GM13976 (cell line): ENCODE measurements at regions of chr13 and their contacts with region 1.

Region 1: GRCh38 chr13:102913914-102914313 is 68.1 kb downstream of the ERCC5 start:
- DNase-seq: no peak
- CTCF ChIP-seq: no peak

Region 2: DNA sequence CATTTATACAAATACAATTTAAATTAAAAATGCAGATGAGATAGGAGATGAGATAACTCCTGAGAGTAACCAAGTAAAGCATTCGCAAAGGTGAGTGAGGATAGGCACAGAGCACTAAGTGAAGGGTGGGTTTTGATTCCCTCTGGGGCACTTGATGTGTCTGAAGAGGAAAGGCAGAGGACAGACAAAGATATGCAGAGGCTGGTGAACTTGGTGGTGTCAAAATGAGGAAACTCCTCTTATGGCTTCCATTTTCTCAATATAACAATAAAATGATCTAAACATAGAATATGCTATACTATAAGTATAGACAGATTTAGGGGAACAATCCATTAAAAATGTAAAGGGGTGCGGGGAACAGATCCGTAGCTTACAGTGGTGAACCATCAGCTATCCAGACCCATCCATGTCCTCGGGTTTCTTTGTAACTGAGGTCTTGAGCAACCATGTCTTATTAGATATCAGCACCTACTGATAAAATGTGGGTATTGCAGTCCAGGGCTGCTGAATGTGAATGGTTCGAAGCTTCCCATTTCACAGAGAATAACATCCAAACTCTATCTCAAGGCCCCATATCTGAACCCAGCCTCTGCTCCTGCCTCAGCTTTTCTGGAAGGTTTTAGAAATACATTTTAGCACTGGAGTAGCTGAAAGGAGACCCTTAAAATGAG is 226.2 kb after region 1 on chr13:
- in situ Hi-C with region 1: loop called (anchors 5 kb)
- DNase-seq: peak; percentile 47
- CTCF ChIP-seq: peak; percentile 74

Region 3: DNA sequence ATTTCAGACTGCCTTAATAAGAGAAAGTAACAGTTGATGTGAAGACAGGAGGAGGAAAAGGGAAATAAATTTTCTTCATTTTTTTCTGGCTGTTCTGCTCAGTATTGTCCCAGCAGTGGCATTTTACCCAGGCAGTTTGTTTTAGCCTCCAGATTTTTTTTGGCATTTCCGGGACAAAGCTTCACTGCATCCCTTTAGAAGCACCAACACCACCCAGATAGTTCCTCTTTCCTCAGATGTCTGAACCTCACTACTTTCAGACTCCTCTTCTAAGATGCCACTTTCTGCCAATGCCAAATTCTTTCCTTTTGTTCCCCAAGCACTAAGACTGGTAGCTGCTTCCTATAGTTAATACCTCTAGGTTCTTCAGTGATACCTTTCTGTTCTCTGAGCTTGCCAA is 632.4 kb after region 1 on chr13:
- in situ Hi-C with region 1: no loop called
- DNase-seq: no peak
- CTCF ChIP-seq: no peak